ENCODE measurements at regions of chr18 and their contacts with region 1.

Region 1: GRCh38 chr18:24014062-24014985 is at the start of gene TTC39C:
- DNase-seq: peak; percentile 84
- H3K4me3 ChIP-seq: peak within 1 kb of the TSS; percentile 77 to 95 (median 89)
- H3K27ac ChIP-seq: peak within 1 kb of the TSS; percentile 87 to 89 (median 87)
- H3K4me1 ChIP-seq: peaks cover 0 to 20% (median 8%) of the 10 kb centered on the region in 4 donors
- H3K27me3 ChIP-seq: no peaks in the 10 kb centered on the region
- CTCF ChIP-seq: no peak
- EP300 ChIP-seq: no peak
- POLR2A ChIP-seq: no peak
- total RNA-seq, gene TTC39C: 27.0 to 36.9 (median 30.0) TPM

Region 2: GRCh38 chr18:23958036-23958435 is 56.3 kb before region 1 on chr18:
- intact Hi-C with region 1: loop called (anchors 1 kb)
- DNase-seq: peak; percentile 93
- H3K4me3 ChIP-seq: no peak overlapping the region
- H3K27ac ChIP-seq: peak overlapping the region; percentile 68 to 78 (median 76)
- H3K4me1 ChIP-seq: peaks cover 0 to 23% (median 15%) of the 10 kb centered on the region in 4 donors
- H3K27me3 ChIP-seq: no peaks in the 10 kb centered on the region
- CTCF ChIP-seq: no peak
- EP300 ChIP-seq: no peak
- POLR2A ChIP-seq: no peak

Region 3: GRCh38 chr18:24075731-24076130 is 61.4 kb after region 1 on chr18:
- intact Hi-C with region 1: loop called (anchors 5 kb)
- DNase-seq: no peak
- H3K4me3 ChIP-seq: no peak overlapping the region
- H3K27ac ChIP-seq: peak overlapping the region; percentile 59 to 68 (median 62)
- H3K4me1 ChIP-seq: peaks cover 0 to 16% (median 9%) of the 10 kb centered on the region in 4 donors
- H3K27me3 ChIP-seq: no peaks in the 10 kb centered on the region
- CTCF ChIP-seq: no peak
- EP300 ChIP-seq: no peak
- POLR2A ChIP-seq: no peak

Region 4: DNA sequence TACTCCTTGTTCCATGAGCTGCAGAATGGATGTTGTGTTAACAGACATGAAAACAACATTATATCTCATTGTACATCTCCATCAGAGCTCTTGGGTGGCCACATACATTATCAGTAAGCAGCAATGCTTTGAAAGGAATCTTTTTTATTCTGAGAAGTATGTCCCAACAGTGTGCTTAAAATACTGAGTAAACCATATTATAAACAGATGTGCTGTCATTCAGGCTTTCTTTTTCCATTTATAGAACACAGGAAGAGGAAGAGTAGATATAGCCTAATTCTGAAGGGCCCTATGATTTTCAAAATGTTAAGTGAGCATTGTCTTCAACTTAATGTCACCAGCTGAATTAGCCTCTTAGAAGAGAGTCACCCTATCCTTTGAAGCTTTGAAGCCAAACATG is 80.2 kb after region 1 on chr18:
- intact Hi-C with region 1: no loop called
- DNase-seq: no peak
- H3K4me3 ChIP-seq: no peak overlapping the region
- H3K27ac ChIP-seq: no peak overlapping the region
- H3K4me1 ChIP-seq: peaks cover 0 to under 1% (median 0%) of the 10 kb centered on the region in 4 donors
- H3K27me3 ChIP-seq: no peaks in the 10 kb centered on the region
- CTCF ChIP-seq: no peak
- EP300 ChIP-seq: no peak
- POLR2A ChIP-seq: no peak

Region 5: GRCh38 chr18:24176727-24177416 is 162.5 kb after region 1 on chr18:
- intact Hi-C with region 1: no loop called
- DNase-seq: peak; percentile 83
- H3K4me3 ChIP-seq: no peak overlapping the region
- H3K27ac ChIP-seq: no peak overlapping the region
- H3K4me1 ChIP-seq: peaks cover 0 to 7% (median 0%) of the 10 kb centered on the region in 4 donors
- H3K27me3 ChIP-seq: no peaks in the 10 kb centered on the region
- CTCF ChIP-seq: peak; percentile 57 to 76 (median 61)
- EP300 ChIP-seq: no peak
- POLR2A ChIP-seq: no peak

Measured in sigmoid colon (tissue), 7 donors.